ENCODE measurements at regions of chr12 and their contacts with region 1.

Region 1: GRCh38 chr12:50901685-50902113 is 50.6 kb upstream of the HIGD1C start:
- DNase-seq: no peak
- H3K4me3 ChIP-seq: no peak overlapping the region
- H3K27ac ChIP-seq: no peak overlapping the region
- H3K4me1 ChIP-seq: no peaks in the 10 kb centered on the region
- H3K27me3 ChIP-seq: no peaks in the 10 kb centered on the region
- CTCF ChIP-seq: no peak

Region 2: GRCh38 chr12:50859621-50860310 is 41.9 kb before region 1 on chr12:
- intact Hi-C with region 1: loop called (anchors 10 kb)
- DNase-seq: no peak
- H3K4me3 ChIP-seq: no peak overlapping the region
- H3K27ac ChIP-seq: no peak overlapping the region
- H3K4me1 ChIP-seq: no peaks in the 10 kb centered on the region
- H3K27me3 ChIP-seq: no peaks in the 10 kb centered on the region
- CTCF ChIP-seq: no peak

Region 3: DNA sequence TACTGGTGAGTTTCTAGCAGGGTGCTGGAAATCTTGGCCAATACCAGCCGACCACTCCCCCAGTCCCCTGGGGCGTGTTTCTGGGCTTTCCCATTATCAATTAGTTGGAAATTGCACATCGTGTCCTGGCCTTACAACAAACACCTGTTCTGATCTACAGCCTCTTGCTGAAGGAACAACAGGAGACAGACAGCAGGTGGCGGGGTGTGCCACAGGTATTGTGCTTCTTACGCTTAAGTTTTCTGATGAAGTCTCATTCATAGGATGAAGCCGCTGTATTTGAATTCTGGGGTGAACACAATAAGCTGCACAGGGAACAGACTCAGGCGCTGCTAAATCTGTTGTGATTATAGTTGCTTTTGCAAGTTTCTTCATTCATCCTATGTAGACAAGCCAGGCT is 51.3 kb after region 1 on chr12:
- intact Hi-C with region 1: no loop called
- DNase-seq: no peak
- H3K4me3 ChIP-seq: no peak overlapping the region
- H3K27ac ChIP-seq: no peak overlapping the region
- H3K4me1 ChIP-seq: no peaks in the 10 kb centered on the region
- H3K27me3 ChIP-seq: no peaks in the 10 kb centered on the region
- CTCF ChIP-seq: no peak